ENCODE measurements at regions of chr3 and their contacts with region 1.

Region 1: DNA sequence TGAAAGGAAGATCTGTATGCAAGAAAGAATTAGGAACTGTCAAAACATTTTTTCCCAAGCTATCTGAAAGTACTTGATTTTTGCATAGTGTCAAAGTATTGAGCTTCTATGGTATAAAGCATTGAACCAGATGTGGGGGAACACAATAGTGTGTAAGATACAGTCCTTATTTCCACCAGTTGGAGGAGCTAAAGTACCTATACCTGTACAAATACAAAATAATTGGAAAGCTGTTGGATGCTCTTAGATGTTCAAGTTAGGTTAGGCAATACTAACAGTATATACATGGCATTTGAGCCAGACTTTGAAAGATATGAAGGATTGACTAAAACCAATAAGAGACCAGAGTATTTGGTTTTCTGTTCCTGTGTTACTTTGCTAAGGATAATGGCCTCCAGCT is 148.3 kb downstream of the B3GALNT1 start:
- DNase-seq: no peak
- ATAC-seq: peak in 1 of 8 donors; percentile 37
- H3K4me3 ChIP-seq: no peak overlapping the region
- H3K27ac ChIP-seq: no peak overlapping the region
- H3K4me1 ChIP-seq: peaks cover 0 to 17% (median 9%) of the 10 kb centered on the region in 9 donors
- H3K27me3 ChIP-seq: no peaks in the 10 kb centered on the region
- CTCF ChIP-seq: peak in 6 of 9 donors; percentile 27 to 50 (median 32)

Region 2: GRCh38 chr3:160837394-160837980 is 119.3 kb before region 1 on chr3:
- intact Hi-C with region 1: no loop called
- DNase-seq: no peak
- ATAC-seq: peak in 1 of 8 donors; percentile 13
- H3K4me3 ChIP-seq: no peak overlapping the region
- H3K27ac ChIP-seq: no peak overlapping the region
- H3K4me1 ChIP-seq: peaks cover 0 to 21% (median 7%) of the 10 kb centered on the region in 9 donors
- H3K27me3 ChIP-seq: no peaks in the 10 kb centered on the region
- CTCF ChIP-seq: no peak

Region 3: DNA sequence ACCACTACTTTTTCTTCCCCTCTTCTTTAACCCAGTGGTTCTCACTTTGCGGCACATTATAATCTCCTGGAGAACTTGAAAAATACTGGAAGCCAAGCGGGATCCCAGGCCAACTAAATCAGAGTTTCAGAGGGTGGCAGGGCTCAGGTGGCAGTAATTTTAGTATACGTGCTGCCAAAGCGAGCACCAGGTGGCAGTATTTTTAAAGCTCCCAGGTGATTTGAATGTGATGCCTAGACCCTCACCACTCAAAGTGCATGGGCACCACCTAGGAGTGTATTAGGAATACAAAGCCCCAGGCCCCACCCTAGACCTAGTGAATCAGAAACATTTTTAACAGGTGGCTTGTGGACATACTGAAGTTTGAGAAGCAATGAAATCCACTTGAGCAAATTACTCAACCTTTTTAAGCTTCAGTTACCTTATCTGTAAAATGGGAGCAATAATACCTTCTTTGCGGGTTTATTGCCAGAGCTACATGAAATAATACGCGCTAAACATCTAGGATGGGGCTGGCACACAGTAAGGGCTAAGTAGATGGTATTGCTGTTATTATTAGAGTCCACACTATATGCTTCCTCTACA is 140.1 kb after region 1 on chr3:
- intact Hi-C with region 1: loop called in 1 of 10 experiments (anchors 10 kb)
- DNase-seq: no peak
- ATAC-seq: peak in 3 of 8 donors; percentile 4 to 30 (median 28)
- H3K4me3 ChIP-seq: no peak overlapping the region
- H3K27ac ChIP-seq: peak overlapping the region in 3 of 10 donors; percentile 6 to 92 (median 20)
- H3K4me1 ChIP-seq: peaks cover 0 to 57% (median 10%) of the 10 kb centered on the region in 9 donors
- H3K27me3 ChIP-seq: no peaks in the 10 kb centered on the region
- CTCF ChIP-seq: peak in 5 of 9 donors; percentile 34 to 56 (median 44)

Region 4: DNA sequence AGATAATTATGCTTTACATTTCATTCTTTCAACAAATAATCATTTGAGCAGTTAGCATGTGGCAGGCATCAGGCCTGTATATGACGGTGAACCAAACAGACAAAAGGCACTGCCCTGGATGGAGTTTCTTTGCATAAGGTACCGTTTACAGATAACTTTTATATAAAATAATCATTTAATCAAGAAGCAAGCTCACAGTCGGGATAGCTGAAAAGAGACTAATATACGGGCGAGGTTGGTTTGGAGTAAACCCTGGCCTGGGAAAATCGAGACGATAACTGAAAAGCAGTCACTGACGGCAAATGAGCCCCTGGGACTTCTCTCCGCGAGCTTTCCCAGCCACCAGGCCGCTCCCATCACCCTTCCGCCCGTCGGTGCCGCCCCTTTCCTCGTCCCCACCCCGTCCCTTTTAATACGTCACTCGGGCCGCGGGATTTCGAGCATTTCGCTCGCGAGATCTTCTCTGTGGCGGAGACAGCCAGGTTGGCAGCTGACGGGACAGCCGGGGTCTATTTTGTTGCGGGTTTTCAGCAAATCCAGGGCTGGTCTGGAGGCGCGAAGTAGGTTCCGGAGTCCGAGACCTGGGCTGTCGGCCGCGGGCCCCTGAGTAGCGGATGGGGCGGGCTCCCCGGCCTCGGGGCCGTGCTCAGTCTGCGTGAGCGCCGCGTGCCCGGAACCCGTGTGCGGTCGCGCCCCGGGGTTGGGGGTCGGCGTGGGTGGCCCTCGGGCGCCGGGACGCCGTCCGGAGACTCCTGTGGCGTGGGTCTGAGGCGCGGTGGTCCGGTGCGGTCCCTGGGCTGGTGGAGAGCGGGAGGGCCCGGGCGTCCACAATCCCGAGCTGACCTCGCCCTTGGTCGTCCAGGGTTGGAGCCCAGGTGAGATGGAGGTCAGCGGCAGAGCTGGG is 264.3 kb after region 1 on chr3 and contains the start of gene NMD3:
- intact Hi-C with region 1: loop called in 1 of 10 experiments (anchors 10 kb)
- DNase-seq: peak; percentile 97 to 98
- ATAC-seq: peak; percentile 97 to 98 (median 97)
- H3K4me3 ChIP-seq: peak within 1 kb of the TSS; percentile 84 to 99 (median 93)
- H3K27ac ChIP-seq: peak within 1 kb of the TSS; percentile 87 to 99 (median 97)
- H3K4me1 ChIP-seq: peaks cover 0 to 54% (median 47%) of the 10 kb centered on the region in 9 donors
- H3K27me3 ChIP-seq: no peaks in the 10 kb centered on the region
- CTCF ChIP-seq: no peak
- total RNA-seq, gene NMD3: 50.9 to 76.9 (median 61.9) TPM

Region 5: GRCh38 chr3:161266731-161267166 is 309.9 kb after region 1 on chr3:
- intact Hi-C with region 1: loop called in 1 of 10 experiments (anchors 10 kb)
- DNase-seq: no peak
- ATAC-seq: peak in 2 of 8 donors; percentile 44 to 51
- H3K4me3 ChIP-seq: no peak overlapping the region
- H3K27ac ChIP-seq: no peak overlapping the region
- H3K4me1 ChIP-seq: peaks cover 0 to 21% (median 10%) of the 10 kb centered on the region in 9 donors
- H3K27me3 ChIP-seq: no peaks in the 10 kb centered on the region
- CTCF ChIP-seq: no peak

Measured in heart right ventricle (tissue), 16 donors.